Activated naive CD4-positive, alpha-beta T cell treated with anti-CD3 and anti-CD28 coated beads for 36 hours (primary cell): ENCODE measurements at regions of chr12 and their contacts with region 1.

Region 1: GRCh38 chr12:96399919-96400797 is at the start of gene CDK17:
- DNase-seq: peak; percentile 90
- H3K4me3 Mint-ChIP-seq: peak within 1 kb of the TSS; percentile 81
- H3K27ac Mint-ChIP-seq: peak within 1 kb of the TSS; percentile 94
- H3K4me1 Mint-ChIP-seq: peaks cover 35% of the 10 kb centered on the region
- H3K27me3 Mint-ChIP-seq: no peaks in the 10 kb centered on the region
- total RNA-seq, gene CDK17: 41.4 to 45.8 TPM

Region 2: DNA sequence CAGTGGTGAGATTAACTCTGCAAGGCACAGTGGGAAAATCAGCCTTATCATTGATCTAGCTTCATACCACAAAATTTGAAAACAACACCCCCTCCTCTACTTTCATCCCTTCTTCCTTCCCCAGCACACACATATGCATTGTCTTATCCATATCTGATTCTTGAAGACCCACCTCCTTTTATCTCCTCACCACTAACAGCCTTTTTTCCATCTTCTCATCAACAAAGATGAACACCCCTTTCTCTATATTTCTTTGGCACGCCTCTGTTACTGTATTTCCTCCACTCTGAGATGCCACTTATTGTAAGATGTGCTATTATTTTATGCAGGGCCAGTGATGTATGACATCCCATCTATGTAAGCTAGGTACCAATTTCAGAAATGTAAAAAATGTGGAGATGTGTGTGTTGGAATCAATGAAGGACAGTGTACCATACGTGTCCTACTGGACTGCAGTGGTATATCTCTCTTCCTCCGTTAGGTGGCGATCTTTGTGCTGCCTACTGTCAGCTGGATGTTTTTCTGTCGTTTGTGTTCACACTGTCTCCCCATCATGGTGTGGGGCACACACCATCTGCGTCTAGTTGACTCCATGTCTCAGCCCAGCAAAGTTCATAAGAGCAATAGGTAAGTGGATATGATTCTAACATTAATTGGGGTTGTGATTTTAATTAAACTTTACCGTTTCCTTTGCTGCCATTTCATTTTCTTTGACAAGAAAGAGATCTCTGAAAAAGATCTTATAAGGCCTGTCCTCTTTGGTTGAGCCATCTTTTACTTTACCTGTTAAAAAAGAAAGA is 481.8 kb before region 1 on chr12:
- CTCF ChIA-PET with region 1: interaction called, 3 read pairs
- intact Hi-C with region 1: loop called (anchors 2 kb)
- DNase-seq: peak; percentile 65
- H3K4me3 Mint-ChIP-seq: no peak overlapping the region
- H3K27ac Mint-ChIP-seq: no peak overlapping the region
- H3K4me1 Mint-ChIP-seq: no peaks in the 10 kb centered on the region
- H3K27me3 Mint-ChIP-seq: peaks cover 2% of the 10 kb centered on the region

Region 3: DNA sequence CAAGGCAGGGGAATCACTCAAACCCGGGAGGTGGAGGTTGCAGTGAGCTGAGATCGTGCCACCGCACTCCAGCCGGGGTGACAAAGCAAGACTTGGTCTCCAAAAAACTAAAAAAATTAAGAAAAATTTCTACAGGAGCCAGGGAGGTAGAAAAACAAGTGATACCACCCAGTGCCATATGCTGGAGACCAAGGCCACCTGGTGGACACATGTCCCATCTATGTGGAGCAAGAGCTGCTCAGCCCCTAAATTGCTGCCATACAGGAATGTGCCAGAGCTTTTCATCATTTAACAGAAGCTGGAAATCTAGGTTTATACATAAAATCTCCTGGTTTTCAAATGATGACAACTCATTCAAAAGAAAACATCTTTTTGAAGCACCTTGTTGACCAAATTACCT is 267.3 kb before region 1 on chr12:
- CTCF ChIA-PET with region 1: no interaction called
- intact Hi-C with region 1: loop called (anchors 5 kb)
- DNase-seq: peak; percentile 27
- H3K4me3 Mint-ChIP-seq: no peak overlapping the region
- H3K27ac Mint-ChIP-seq: no peak overlapping the region
- H3K4me1 Mint-ChIP-seq: peaks cover 27% of the 10 kb centered on the region
- H3K27me3 Mint-ChIP-seq: no peaks in the 10 kb centered on the region

Region 4: GRCh38 chr12:96237465-96238077 is 162.6 kb before region 1 on chr12:
- CTCF ChIA-PET with region 1: interaction called, 4 read pairs
- intact Hi-C with region 1: loop called (anchors 1 kb)
- DNase-seq: peak; percentile 75
- H3K4me3 Mint-ChIP-seq: no peak overlapping the region
- H3K27ac Mint-ChIP-seq: peak overlapping the region; percentile 47
- H3K4me1 Mint-ChIP-seq: peaks cover 66% of the 10 kb centered on the region
- H3K27me3 Mint-ChIP-seq: no peaks in the 10 kb centered on the region

Region 5: GRCh38 chr12:96352161-96352835 is 47.9 kb before region 1 on chr12:
- CTCF ChIA-PET with region 1: interaction called, 4 read pairs
- intact Hi-C with region 1: loop called (anchors 2 kb)
- DNase-seq: no peak
- H3K4me3 Mint-ChIP-seq: no peak overlapping the region
- H3K27ac Mint-ChIP-seq: no peak overlapping the region
- H3K4me1 Mint-ChIP-seq: peaks cover 75% of the 10 kb centered on the region
- H3K27me3 Mint-ChIP-seq: no peaks in the 10 kb centered on the region

Region 6: DNA sequence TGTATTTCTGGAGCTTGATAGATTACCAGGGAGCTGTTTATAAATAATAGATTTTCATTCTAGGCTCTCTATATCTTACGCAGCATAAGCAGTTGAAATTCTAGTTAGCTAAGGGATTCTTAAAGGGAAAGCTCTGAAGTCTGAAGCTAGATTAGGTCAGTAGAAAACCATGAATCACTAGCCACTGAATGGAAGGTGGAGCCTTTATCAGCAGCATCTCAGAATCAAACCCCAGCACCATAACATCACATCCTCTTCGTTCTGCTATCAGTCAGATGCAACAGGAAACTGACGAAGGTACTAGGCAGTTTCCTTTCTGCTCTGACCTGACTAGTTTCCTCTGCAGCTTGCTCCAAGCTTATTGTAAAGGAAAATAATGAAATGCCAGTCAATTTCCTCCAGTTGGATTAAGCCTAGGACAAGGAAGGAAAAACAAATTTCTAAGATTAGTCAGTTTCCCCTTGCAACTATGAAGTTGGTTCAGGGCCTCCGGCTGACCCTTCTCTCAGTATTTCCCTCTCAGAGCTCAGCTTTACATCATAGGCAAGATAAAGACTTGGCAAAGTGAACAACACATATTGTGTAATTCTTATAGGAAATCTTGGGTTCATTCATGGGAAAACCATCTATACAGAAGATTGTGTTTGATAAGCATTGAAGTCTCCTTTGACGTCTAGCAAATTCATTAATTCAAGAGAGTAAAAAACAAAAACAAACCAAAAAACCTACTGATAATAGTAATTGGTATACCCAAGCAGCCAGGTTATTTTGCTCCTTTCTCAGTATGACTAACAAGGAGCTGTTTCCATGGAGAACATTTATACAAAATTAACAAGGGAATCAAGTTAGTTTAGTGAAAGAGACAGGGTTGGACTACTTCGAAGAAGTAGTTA is 45.8 kb after region 1 on chr12:
- CTCF ChIA-PET with region 1: interaction called, 9 read pairs
- intact Hi-C with region 1: loop called (anchors 1 kb)
- DNase-seq: peak; percentile 68
- H3K4me3 Mint-ChIP-seq: peak overlapping the region; percentile 28
- H3K27ac Mint-ChIP-seq: peak overlapping the region; percentile 94
- H3K4me1 Mint-ChIP-seq: peaks cover 39% of the 10 kb centered on the region
- H3K27me3 Mint-ChIP-seq: no peaks in the 10 kb centered on the region

Region 7: DNA sequence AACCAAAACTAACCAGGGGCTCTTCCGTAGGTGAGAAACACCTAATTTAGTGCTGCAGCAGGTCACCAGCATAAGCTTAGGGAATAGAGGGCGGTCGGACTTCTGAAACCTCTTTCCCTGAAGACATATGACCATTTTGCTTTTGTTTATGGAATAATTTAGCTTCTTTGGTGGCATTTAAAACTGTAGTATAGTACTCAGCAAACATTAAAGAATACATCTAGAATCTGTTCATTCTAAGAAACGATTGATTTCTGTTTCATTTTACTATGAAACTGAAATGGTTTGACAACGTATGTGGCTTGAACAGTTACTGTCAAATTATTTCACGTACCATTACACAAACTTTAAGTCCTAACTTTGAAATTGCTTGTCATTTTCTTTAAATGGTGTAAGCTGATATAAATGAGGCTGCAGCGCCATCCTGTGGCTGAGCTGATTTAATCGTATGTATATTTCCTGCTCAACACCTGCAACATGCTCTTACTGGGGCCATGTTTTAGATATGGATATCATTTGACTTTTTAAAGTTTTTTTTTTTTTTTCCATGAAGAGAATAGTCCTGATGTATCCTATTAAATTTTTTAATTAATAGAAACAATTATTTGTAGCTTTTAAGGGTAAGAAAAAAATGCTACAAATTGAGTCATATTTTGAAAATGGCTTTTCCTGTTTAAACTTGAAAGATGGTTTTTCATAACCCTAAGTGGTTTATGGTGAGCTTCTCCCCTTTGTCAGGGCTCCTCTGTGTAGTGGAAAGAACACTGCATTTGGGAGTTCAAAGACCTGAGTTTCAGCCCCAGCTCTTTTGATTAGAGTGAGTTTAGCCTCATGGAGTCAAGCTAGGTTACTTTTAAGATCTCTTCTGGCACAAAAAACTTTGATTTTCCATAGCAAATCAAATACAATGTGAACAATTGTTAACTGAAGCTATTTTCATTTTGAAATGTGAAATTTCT is 116.6 kb after region 1 on chr12:
- CTCF ChIA-PET with region 1: interaction called, 33 read pairs
- intact Hi-C with region 1: loop called (anchors 1 kb)
- DNase-seq: peak; percentile 96
- H3K4me3 Mint-ChIP-seq: peak overlapping the region; percentile 2
- H3K27ac Mint-ChIP-seq: peak overlapping the region; percentile 25
- H3K4me1 Mint-ChIP-seq: peaks cover 16% of the 10 kb centered on the region
- H3K27me3 Mint-ChIP-seq: no peaks in the 10 kb centered on the region

Region 8: GRCh38 chr12:96770219-96771102 is 370.3 kb after region 1 on chr12:
- CTCF ChIA-PET with region 1: no interaction called
- intact Hi-C with region 1: no loop called
- DNase-seq: no peak
- H3K4me3 Mint-ChIP-seq: no peak overlapping the region
- H3K27ac Mint-ChIP-seq: no peak overlapping the region
- H3K4me1 Mint-ChIP-seq: no peaks in the 10 kb centered on the region
- H3K27me3 Mint-ChIP-seq: no peaks in the 10 kb centered on the region

Region 9: GRCh38 chr12:97194551-97194950 is 794.4 kb after region 1 on chr12:
- CTCF ChIA-PET with region 1: no interaction called
- intact Hi-C with region 1: no loop called
- DNase-seq: no peak
- H3K4me3 Mint-ChIP-seq: no peak overlapping the region
- H3K27ac Mint-ChIP-seq: no peak overlapping the region
- H3K4me1 Mint-ChIP-seq: no peaks in the 10 kb centered on the region
- H3K27me3 Mint-ChIP-seq: peaks cover 4% of the 10 kb centered on the region